ENCODE measurements at regions of chr11 and their contacts with region 1.

Region 1: DNA sequence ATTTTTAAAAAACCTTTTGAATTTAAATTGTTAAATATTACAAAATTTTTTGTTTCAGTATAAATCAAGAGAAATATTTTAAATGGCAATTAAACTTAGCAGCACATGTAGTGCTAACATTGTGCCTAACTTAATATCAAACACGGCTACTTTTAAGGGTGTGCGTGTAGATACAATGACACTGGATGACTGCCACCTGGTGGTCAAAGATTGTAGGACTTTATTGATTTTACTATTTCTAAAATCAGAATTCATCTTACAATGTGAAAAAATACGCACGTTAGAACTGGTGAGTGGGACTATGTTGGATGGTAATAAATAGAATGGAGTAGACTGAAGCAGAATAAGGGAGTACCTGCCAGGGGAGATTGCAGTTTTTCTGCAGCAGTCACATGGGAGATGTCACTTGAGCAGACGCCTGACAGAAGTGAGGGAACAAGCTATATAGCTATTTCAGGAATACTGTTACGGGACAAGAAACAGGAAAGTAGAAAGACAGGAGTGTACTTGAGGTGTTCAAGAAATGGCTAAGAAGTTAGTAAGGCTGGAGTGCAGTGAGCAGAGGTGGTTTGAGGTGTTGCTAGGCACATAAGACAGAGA is 52.9 kb downstream of the UVRAG start:
- DNase-seq: peak; percentile 44
- ATAC-seq: peak; percentile 57
- H3K4me3 Mint-ChIP-seq: no peak overlapping the region
- H3K27ac Mint-ChIP-seq: no peak overlapping the region
- H3K4me1 Mint-ChIP-seq: peaks cover 9% of the 10 kb centered on the region
- H3K27me3 Mint-ChIP-seq: no peaks in the 10 kb centered on the region

Region 2: GRCh38 chr11:75445315-75445953 is 422.4 kb before region 1 on chr11:
- CTCF ChIA-PET with region 1: no interaction called
- DNase-seq: peak; percentile 78
- ATAC-seq: peak; percentile 77
- H3K4me3 Mint-ChIP-seq: no peak overlapping the region
- H3K27ac Mint-ChIP-seq: no peak overlapping the region
- H3K4me1 Mint-ChIP-seq: no peaks in the 10 kb centered on the region
- H3K27me3 Mint-ChIP-seq: peaks cover 2% of the 10 kb centered on the region

Region 3: DNA sequence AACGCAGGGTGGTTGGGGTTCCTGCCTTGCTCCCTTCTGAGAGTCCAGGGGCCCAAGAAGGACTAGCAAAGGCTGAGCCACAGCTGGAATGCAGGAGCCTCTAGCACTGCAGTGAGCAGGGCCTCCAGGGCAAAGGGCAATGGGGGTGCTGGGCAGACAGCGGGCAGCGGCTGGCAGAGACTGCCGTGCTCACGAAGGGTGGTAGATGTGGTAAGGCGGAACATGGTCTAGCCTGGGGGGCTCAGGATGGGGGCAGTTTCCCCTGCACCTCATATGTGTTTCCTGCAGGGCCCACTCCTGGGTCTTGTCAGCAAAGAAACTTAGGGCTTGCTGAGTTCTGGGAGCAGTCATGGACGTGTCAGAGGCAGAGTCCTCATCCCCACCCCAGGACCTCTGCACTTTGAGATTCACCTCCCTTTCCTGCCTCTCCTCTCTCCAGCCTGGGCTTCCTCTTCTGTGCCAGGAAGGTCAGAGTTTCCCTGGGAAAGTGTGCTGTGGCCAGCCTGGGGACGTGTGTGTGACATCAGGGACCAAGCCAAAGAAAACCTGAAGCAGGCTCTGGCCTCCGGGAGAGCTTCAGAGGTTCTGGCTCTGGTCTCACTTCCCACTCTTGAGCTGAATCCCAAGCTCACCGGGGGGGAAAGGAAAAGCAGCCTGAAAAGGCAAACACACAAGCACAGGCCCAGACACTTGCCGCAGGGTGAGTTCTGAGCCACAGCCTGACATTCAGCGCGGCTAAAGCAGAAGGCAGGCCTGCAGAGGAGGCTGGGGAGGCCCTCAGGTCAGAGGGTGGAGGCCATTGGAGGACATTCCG is 145.8 kb before region 1 on chr11:
- CTCF ChIA-PET with region 1: interaction called, 27 read pairs
- DNase-seq: no peak
- ATAC-seq: no peak
- H3K4me3 Mint-ChIP-seq: no peak overlapping the region
- H3K27ac Mint-ChIP-seq: no peak overlapping the region
- H3K4me1 Mint-ChIP-seq: peaks cover 2% of the 10 kb centered on the region
- H3K27me3 Mint-ChIP-seq: peaks cover 1% of the 10 kb centered on the region

Region 4: GRCh38 chr11:75795276-75796090 is 72.4 kb before region 1 on chr11:
- CTCF ChIA-PET with region 1: interaction called, 12 read pairs
- DNase-seq: no peak
- ATAC-seq: no peak
- H3K4me3 Mint-ChIP-seq: no peak overlapping the region
- H3K27ac Mint-ChIP-seq: no peak overlapping the region
- H3K4me1 Mint-ChIP-seq: no peaks in the 10 kb centered on the region
- H3K27me3 Mint-ChIP-seq: no peaks in the 10 kb centered on the region